Pancreas (tissue), 10 donors: ENCODE measurements at regions of chr11 and their contacts with region 1.

Region 1: GRCh38 chr11:30128269-30128932 is 102.4 kb upstream of the FSHB start:
- DNase-seq: peak in 1 of 6 donors; percentile 9
- ATAC-seq: peak in 3 of 4 donors; percentile 49 to 57 (median 51)
- H3K4me3 ChIP-seq: no peak overlapping the region
- H3K27ac ChIP-seq: no peak overlapping the region
- H3K4me1 ChIP-seq: no peaks in the 10 kb centered on the region
- H3K27me3 ChIP-seq: no peaks in the 10 kb centered on the region
- CTCF ChIP-seq: peak in 3 of 4 donors; percentile 36 to 56 (median 54)

Region 2: GRCh38 chr11:29937526-29937925 is 190.9 kb before region 1 on chr11:
- intact Hi-C with region 1: no loop called
- DNase-seq: no peak
- ATAC-seq: no peak
- H3K4me3 ChIP-seq: no peak overlapping the region
- H3K27ac ChIP-seq: no peak overlapping the region
- H3K4me1 ChIP-seq: no peaks in the 10 kb centered on the region
- H3K27me3 ChIP-seq: no peaks in the 10 kb centered on the region
- CTCF ChIP-seq: no peak

Region 3: GRCh38 chr11:30196400-30197206 is 68.2 kb after region 1 on chr11:
- intact Hi-C with region 1: loop called in 1 of 3 experiments (anchors 10 kb)
- DNase-seq: peak; percentile 32 to 81 (median 62)
- ATAC-seq: peak; percentile 80 to 98 (median 94)
- H3K4me3 ChIP-seq: no peak overlapping the region
- H3K27ac ChIP-seq: no peak overlapping the region
- H3K4me1 ChIP-seq: no peaks in the 10 kb centered on the region
- H3K27me3 ChIP-seq: no peaks in the 10 kb centered on the region
- CTCF ChIP-seq: peak; percentile 61 to 81 (median 73)